ENCODE measurements at regions of chr11 and their contacts with region 1.

Region 1: GRCh38 chr11:134275534-134276395 is at the start of gene GLB1L3:
- DNase-seq: peak; percentile 77 to 85 (median 79)
- H3K4me3 ChIP-seq: peak within 1 kb of the TSS; percentile 85 to 87
- H3K4me3 Mint-ChIP-seq: peak within 1 kb of the TSS; percentile 93 to 98 (median 96)
- H3K27ac ChIP-seq: peak within 1 kb of the TSS; percentile 61
- H3K27ac Mint-ChIP-seq: peak within 1 kb of the TSS; percentile 82 to 95 (median 91)
- H3K4me1 ChIP-seq: peaks cover 37% of the 10 kb centered on the region
- H3K4me1 Mint-ChIP-seq: peaks cover 23 to 57% (median 41%) of the 10 kb centered on the region in 4 donors
- H3K27me3 ChIP-seq: no peaks in the 10 kb centered on the region
- H3K27me3 Mint-ChIP-seq: no peaks in the 10 kb centered on the region
- total RNA-seq, gene GLB1L3: 1.2 to 1.5 TPM

Region 2: GRCh38 chr11:133243832-133244231 is 1031.9 kb before region 1 on chr11:
- CTCF ChIA-PET with region 1: no interaction called
- POLR2A ChIA-PET with region 1: no interaction called
- intact Hi-C with region 1: no loop called
- DNase-seq: no peak
- H3K4me3 ChIP-seq: no peak overlapping the region
- H3K4me3 Mint-ChIP-seq: no peak overlapping the region
- H3K27ac ChIP-seq: no peak overlapping the region
- H3K27ac Mint-ChIP-seq: no peak overlapping the region
- H3K4me1 ChIP-seq: no peaks in the 10 kb centered on the region
- H3K4me1 Mint-ChIP-seq: no peaks in the 10 kb centered on the region
- H3K27me3 ChIP-seq: no peaks in the 10 kb centered on the region
- H3K27me3 Mint-ChIP-seq: peaks cover 0 to 2% of the 10 kb centered on the region in 2 donors

Region 3: DNA sequence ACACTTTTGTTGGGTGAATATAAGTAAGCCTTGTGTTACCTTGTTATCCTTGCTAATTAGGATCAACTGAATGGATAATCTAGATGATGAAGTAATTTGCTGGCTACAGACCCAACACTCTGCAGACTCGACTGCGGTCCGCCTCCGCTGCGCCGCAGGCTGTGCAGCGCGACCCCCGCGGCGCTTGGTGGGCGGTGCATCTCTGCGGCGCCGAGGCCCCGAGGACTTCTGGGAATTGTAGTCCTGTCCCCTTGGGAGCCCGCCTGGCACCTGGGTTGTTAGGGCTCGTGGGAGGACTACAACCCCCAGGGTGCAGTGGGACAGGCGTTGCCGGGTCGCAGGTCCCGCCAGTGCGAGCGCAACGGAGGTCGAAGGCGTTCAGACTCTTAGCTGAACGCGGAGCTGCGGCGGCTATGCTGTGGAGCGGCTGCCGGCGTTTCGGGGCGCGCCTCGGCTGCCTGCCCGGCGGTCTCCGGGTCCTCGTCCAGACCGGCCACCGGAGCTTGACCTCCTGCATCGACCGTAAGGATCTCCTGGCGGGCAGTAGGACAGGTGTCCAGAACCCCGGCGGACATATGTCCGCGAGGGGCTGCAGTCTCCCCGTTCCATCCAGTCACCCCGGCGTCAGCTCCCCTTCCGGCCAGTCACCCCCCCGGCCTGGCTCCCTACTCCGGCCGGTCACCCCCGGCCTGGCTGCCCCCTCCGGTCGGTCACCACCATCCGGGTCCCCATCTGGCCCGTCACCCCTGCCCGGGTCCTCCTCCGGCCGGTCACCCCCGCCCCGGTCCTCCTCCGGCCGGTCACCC is 22.4 kb before region 1 on chr11 and contains the starts of genes ACAD8 and THYN1:
- CTCF ChIA-PET with region 1: interaction called, 9 read pairs
- POLR2A ChIA-PET with region 1: interaction called, 17 read pairs
- intact Hi-C with region 1: loop called (anchors 1 kb)
- DNase-seq: peak; percentile 94 to 97 (median 95)
- H3K4me3 ChIP-seq: peak within 1 kb of the TSS; percentile 71 to 93
- H3K4me3 Mint-ChIP-seq: peak within 1 kb of the TSS; percentile 91 to 96 (median 94)
- H3K27ac ChIP-seq: peak within 1 kb of the TSS; percentile 62
- H3K27ac Mint-ChIP-seq: peak within 1 kb of the TSS; percentile 54 to 91 (median 89)
- H3K4me1 ChIP-seq: peaks cover 30% of the 10 kb centered on the region
- H3K4me1 Mint-ChIP-seq: peaks cover 21 to 43% (median 34%) of the 10 kb centered on the region in 4 donors
- H3K27me3 ChIP-seq: no peaks in the 10 kb centered on the region
- H3K27me3 Mint-ChIP-seq: no peaks in the 10 kb centered on the region
- total RNA-seq, gene ACAD8: 36.9 to 38.6 TPM
- total RNA-seq, gene THYN1: 59.3 to 70.8 TPM

Region 4: GRCh38 chr11:134261626-134262488 is 13.9 kb before region 1 on chr11:
- CTCF ChIA-PET with region 1: interaction called, 119 read pairs
- POLR2A ChIA-PET with region 1: interaction called, 28 read pairs
- intact Hi-C with region 1: no loop called
- DNase-seq: peak in 4 of 5 donors; percentile 31 to 40 (median 36)
- H3K4me3 ChIP-seq: no peak overlapping the region
- H3K4me3 Mint-ChIP-seq: no peak overlapping the region
- H3K27ac ChIP-seq: no peak overlapping the region
- H3K27ac Mint-ChIP-seq: peak overlapping the region in 1 of 7 donors; percentile 10
- H3K4me1 ChIP-seq: no peaks in the 10 kb centered on the region
- H3K4me1 Mint-ChIP-seq: peaks cover 3 to 9% (median 6%) of the 10 kb centered on the region in 4 donors
- H3K27me3 ChIP-seq: no peaks in the 10 kb centered on the region
- H3K27me3 Mint-ChIP-seq: no peaks in the 10 kb centered on the region

Region 5: GRCh38 chr11:134331354-134332188 is 55.8 kb after region 1 on chr11 and contains the start of gene GLB1L2:
- CTCF ChIA-PET with region 1: interaction called, 3 read pairs
- POLR2A ChIA-PET with region 1: interaction called, 4 read pairs
- intact Hi-C with region 1: loop called (anchors 2 kb)
- DNase-seq: peak; percentile 77 to 83 (median 80)
- H3K4me3 ChIP-seq: peak within 1 kb of the TSS in 1 of 2 donors; percentile 59
- H3K4me3 Mint-ChIP-seq: peak within 1 kb of the TSS; percentile 85 to 95 (median 91)
- H3K27ac ChIP-seq: no peak within 1 kb of the TSS
- H3K27ac Mint-ChIP-seq: peak within 1 kb of the TSS; percentile 20 to 90 (median 84)
- H3K4me1 ChIP-seq: peaks cover 14% of the 10 kb centered on the region
- H3K4me1 Mint-ChIP-seq: peaks cover 7 to 22% (median 12%) of the 10 kb centered on the region in 4 donors
- H3K27me3 ChIP-seq: no peaks in the 10 kb centered on the region
- H3K27me3 Mint-ChIP-seq: peaks cover 0 to 4% of the 10 kb centered on the region in 2 donors
- total RNA-seq, gene GLB1L2: 1.2 to 1.5 TPM

Measured in CD4-positive, alpha-beta memory T cell (primary cell).